A673 (cell line): ENCODE measurements at regions of chr16 and their contacts with region 1.

Region 1: GRCh38 chr16:51971184-51971583 is 575.8 kb downstream of the TOX3 start:
- DNase-seq: peak; percentile 74
- H3K4me3 ChIP-seq: no peak overlapping the region
- H3K27ac ChIP-seq: no peak overlapping the region
- H3K4me1 ChIP-seq: peaks cover 49% of the 10 kb centered on the region
- H3K27me3 ChIP-seq: no peaks in the 10 kb centered on the region
- CTCF ChIP-seq: peak; percentile 82

Region 2: DNA sequence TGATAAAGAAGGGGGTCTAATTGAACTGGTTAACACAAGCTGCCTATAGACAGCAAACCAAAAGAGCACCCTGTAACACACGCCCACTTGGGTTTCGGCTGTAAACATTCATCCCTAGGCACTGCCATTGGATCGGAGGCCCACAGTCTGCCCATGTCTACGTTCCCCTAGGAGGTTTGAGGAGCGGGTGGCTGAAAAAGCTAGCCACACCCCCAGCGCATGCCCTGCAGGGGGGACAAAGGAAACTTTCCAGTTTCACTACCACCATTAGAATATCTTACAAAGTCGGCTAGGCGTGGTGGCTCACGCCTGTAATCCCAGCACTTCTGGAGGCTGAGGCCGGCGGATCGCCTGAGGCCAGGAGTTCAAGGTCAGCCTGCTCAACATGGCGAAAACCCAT is 197.7 kb before region 1 on chr16:
- CTCF ChIA-PET with region 1: no interaction called
- POLR2A ChIA-PET with region 1: no interaction called
- intact Hi-C with region 1: loop called (anchors 5 kb)
- DNase-seq: no peak
- H3K4me3 ChIP-seq: no peak overlapping the region
- H3K27ac ChIP-seq: no peak overlapping the region
- H3K4me1 ChIP-seq: no peaks in the 10 kb centered on the region
- H3K27me3 ChIP-seq: no peaks in the 10 kb centered on the region
- CTCF ChIP-seq: no peak

Region 3: GRCh38 chr16:51818342-51818944 is 152.7 kb before region 1 on chr16:
- CTCF ChIA-PET with region 1: interaction called, 23 read pairs
- POLR2A ChIA-PET with region 1: interaction called, 4 read pairs
- intact Hi-C with region 1: loop called (anchors 1 kb)
- DNase-seq: peak; percentile 78
- H3K4me3 ChIP-seq: no peak overlapping the region
- H3K27ac ChIP-seq: no peak overlapping the region
- H3K4me1 ChIP-seq: peaks cover 9% of the 10 kb centered on the region
- H3K27me3 ChIP-seq: no peaks in the 10 kb centered on the region
- CTCF ChIP-seq: peak; percentile 88

Region 4: GRCh38 chr16:51898872-51899271 is 72.3 kb before region 1 on chr16:
- CTCF ChIA-PET with region 1: interaction called, 3 read pairs
- POLR2A ChIA-PET with region 1: no interaction called
- intact Hi-C with region 1: loop called (anchors 5 kb)
- DNase-seq: peak; percentile 45
- H3K4me3 ChIP-seq: no peak overlapping the region
- H3K27ac ChIP-seq: no peak overlapping the region
- H3K4me1 ChIP-seq: peaks cover 6% of the 10 kb centered on the region
- H3K27me3 ChIP-seq: no peaks in the 10 kb centered on the region
- CTCF ChIP-seq: no peak

Region 5: GRCh38 chr16:51996516-51996915 is 25.3 kb after region 1 on chr16:
- CTCF ChIA-PET with region 1: no interaction called
- POLR2A ChIA-PET with region 1: no interaction called
- intact Hi-C with region 1: no loop called
- DNase-seq: no peak
- H3K4me3 ChIP-seq: no peak overlapping the region
- H3K27ac ChIP-seq: no peak overlapping the region
- H3K4me1 ChIP-seq: peaks cover 8% of the 10 kb centered on the region
- H3K27me3 ChIP-seq: no peaks in the 10 kb centered on the region
- CTCF ChIP-seq: no peak